CD4-positive, alpha-beta T cell (primary cell): ENCODE measurements at regions of chr3 and their contacts with region 1.

Region 1: DNA sequence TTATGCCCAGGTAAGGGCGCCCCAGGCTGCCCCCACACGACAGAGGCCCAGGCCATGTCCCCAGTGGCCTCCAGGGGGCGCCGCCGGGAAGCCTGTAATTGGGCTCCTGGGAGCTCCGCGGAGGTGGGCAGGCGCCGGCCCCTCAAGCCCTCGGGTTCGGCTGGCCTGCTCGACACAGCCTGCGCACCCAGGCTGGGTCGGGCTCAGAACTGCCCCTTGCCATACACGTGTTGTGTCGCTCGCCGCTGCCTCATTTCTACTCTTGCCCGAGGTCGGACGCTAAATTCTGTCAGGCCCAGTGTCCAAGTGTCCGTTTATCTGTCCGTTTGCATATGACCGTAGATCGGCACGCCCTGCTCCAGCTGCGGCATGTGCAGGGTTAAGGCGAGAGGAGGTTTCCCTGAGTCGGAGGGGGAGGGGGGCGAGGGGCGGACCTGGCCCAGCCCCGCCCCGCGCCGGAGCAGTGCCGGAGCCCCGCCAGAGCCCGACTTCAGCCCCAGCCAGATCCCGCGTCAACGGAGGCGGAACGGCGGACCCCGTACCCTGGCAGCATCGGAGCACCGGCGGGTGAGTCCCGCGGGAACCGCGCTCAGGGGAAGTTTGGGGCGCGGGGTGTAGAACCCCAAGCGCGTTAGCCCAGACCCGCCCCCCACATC is at the start of gene KLHDC8B:
- DNase-seq: peak; percentile 66 to 87 (median 77)
- ATAC-seq: peak; percentile 84
- H3K4me3 ChIP-seq: peak within 1 kb of the TSS; percentile 80
- H3K4me3 Mint-ChIP-seq: peak within 1 kb of the TSS; percentile 89
- H3K27ac ChIP-seq: no peak within 1 kb of the TSS
- H3K27ac Mint-ChIP-seq: peak within 1 kb of the TSS; percentile 78
- H3K4me1 ChIP-seq: peaks cover 34% of the 10 kb centered on the region
- H3K4me1 Mint-ChIP-seq: peaks cover 33% of the 10 kb centered on the region
- H3K27me3 ChIP-seq: no peaks in the 10 kb centered on the region
- H3K27me3 Mint-ChIP-seq: no peaks in the 10 kb centered on the region
- CTCF ChIP-seq: peak; percentile 87
- total RNA-seq, gene KLHDC8B: 1.2 to 1.6 TPM

Region 2: GRCh38 chr3:48820612-48821324 is 350.5 kb before region 1 on chr3:
- CTCF ChIA-PET with region 1: no interaction called
- POLR2A ChIA-PET with region 1: no interaction called
- intact Hi-C with region 1: no loop called
- DNase-seq: no peak
- ATAC-seq: no peak
- H3K4me3 ChIP-seq: no peak overlapping the region
- H3K4me3 Mint-ChIP-seq: no peak overlapping the region
- H3K27ac ChIP-seq: no peak overlapping the region
- H3K27ac Mint-ChIP-seq: peak overlapping the region; percentile 43
- H3K4me1 ChIP-seq: peaks cover 7% of the 10 kb centered on the region
- H3K4me1 Mint-ChIP-seq: peaks cover 46% of the 10 kb centered on the region
- H3K27me3 ChIP-seq: no peaks in the 10 kb centered on the region
- H3K27me3 Mint-ChIP-seq: no peaks in the 10 kb centered on the region
- CTCF ChIP-seq: no peak

Region 3: DNA sequence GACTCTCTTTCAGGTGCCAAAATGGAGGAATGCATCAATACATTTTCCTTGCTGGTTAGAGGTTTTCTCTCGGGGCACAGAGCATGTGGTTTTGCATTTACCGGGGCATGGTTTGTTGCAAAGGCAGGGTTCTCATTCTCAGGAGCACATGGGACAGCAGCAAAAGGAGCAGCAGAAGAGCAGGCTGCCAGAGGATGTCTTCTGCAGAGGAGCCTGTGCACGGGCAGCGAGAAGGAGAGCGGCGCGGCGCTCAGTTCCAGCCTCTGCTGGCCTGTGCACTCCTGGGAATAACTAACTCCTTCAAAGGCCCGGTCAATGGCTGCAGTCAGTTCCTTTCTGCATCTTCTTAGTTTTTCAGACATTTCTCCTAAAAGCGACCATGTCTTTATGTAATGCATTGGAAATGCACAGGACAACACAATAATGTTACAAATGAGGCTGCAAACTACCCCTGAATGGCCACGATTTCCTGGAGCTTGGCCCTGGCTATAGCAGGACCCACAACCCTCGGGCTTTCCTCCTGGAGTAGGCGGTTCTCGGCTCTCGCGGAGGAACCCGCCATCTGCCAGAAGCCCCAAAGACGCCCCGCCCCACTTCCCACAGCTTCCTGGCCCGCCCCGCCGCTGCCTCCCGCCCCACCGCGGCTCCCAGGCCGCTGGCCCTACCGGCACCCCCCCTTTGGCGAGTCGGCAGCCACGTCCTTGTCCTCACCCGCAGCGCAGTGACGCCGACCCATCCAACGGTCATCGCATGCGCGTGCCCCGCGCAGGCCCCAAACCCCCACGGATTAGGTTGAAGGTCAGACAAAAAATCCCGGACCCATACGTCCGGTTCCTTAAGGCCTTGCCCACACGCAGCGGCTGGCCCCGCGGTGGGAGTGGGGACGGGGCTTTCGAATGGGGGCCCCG is 105.5 kb after region 1 on chr3 and contains the start of gene C3orf62:
- CTCF ChIA-PET with region 1: interaction called, 3 read pairs
- POLR2A ChIA-PET with region 1: no interaction called
- intact Hi-C with region 1: loop called in 1 of 2 experiments (anchors 5 kb)
- DNase-seq: peak; percentile 46 to 83 (median 66)
- ATAC-seq: peak; percentile 89
- H3K4me3 ChIP-seq: peak within 1 kb of the TSS; percentile 54
- H3K4me3 Mint-ChIP-seq: peak within 1 kb of the TSS; percentile 90
- H3K27ac ChIP-seq: peak within 1 kb of the TSS; percentile 66 to 85
- H3K27ac Mint-ChIP-seq: peak within 1 kb of the TSS; percentile 85
- H3K4me1 ChIP-seq: peaks cover 21% of the 10 kb centered on the region
- H3K4me1 Mint-ChIP-seq: peaks cover 27% of the 10 kb centered on the region
- H3K27me3 ChIP-seq: no peaks in the 10 kb centered on the region
- H3K27me3 Mint-ChIP-seq: no peaks in the 10 kb centered on the region
- CTCF ChIP-seq: no peak
- total RNA-seq, gene C3orf62: 7.0 to 7.5 TPM

Region 4: GRCh38 chr3:49454458-49454857 is 283.2 kb after region 1 on chr3:
- CTCF ChIA-PET with region 1: interaction called, 3 read pairs
- POLR2A ChIA-PET with region 1: no interaction called
- intact Hi-C with region 1: loop called in 1 of 2 experiments (anchors 2 kb)
- DNase-seq: peak in 1 of 14 experiments; percentile 7
- ATAC-seq: no peak
- H3K4me3 ChIP-seq: no peak overlapping the region
- H3K4me3 Mint-ChIP-seq: no peak overlapping the region
- H3K27ac ChIP-seq: no peak overlapping the region
- H3K27ac Mint-ChIP-seq: no peak overlapping the region
- H3K4me1 ChIP-seq: no peaks in the 10 kb centered on the region
- H3K4me1 Mint-ChIP-seq: no peaks in the 10 kb centered on the region
- H3K27me3 ChIP-seq: no peaks in the 10 kb centered on the region
- H3K27me3 Mint-ChIP-seq: no peaks in the 10 kb centered on the region
- CTCF ChIP-seq: no peak

Region 5: DNA sequence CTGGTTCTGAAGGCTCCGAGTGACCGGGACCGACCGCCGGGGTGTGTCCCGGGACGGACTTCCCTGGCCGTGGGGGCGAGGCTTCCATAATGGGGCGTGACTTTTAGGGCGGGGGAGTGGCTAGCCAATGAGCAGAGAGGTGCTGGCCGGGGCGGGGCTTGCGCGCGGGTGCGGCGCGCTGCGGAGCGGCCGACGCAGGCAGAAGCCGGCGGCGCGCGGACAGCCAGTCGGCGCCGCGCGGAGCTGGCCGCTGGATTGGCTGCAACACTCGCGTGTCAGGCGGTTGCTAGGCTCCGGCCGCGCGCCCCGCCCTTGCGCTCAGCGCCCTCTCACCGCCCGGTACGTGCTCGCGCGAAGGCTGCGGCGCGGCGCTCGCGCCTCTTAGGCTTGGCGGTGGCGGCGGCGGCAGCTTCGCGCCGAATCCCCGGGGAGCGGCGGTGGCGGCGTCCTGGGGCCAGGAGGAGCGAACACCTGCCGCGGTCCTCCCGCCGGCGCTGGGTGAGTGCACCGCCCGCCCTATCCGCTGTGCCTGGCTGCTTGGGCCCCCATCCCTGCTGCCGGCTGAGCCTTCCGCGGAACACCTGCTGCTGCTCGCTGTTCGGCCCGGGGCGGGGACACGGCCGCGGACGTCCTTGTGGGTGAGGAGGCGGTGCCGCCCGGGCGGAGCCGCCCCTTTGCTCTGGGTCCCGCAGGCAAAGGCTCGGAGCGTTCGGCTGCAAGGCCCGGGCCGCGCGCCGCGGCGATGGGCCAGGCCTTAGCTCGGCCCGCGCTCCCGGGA is 298.9 kb after region 1 on chr3 and contains the start of gene DAG1:
- CTCF ChIA-PET with region 1: no interaction called
- POLR2A ChIA-PET with region 1: no interaction called
- intact Hi-C with region 1: loop called in 1 of 2 experiments (anchors 5 kb)
- DNase-seq: peak; percentile 88 to 99 (median 94)
- ATAC-seq: peak; percentile 82
- H3K4me3 ChIP-seq: peak within 1 kb of the TSS; percentile 78
- H3K4me3 Mint-ChIP-seq: peak within 1 kb of the TSS; percentile 91
- H3K27ac ChIP-seq: peak within 1 kb of the TSS; percentile 86 to 88
- H3K27ac Mint-ChIP-seq: peak within 1 kb of the TSS; percentile 95
- H3K4me1 ChIP-seq: peaks cover 26% of the 10 kb centered on the region
- H3K4me1 Mint-ChIP-seq: peaks cover 23% of the 10 kb centered on the region
- H3K27me3 ChIP-seq: no peaks in the 10 kb centered on the region
- H3K27me3 Mint-ChIP-seq: no peaks in the 10 kb centered on the region
- CTCF ChIP-seq: no peak
- total RNA-seq, gene DAG1: 15.0 to 18.3 TPM